ENCODE measurements at regions of chr7 and their contacts with region 1.

Region 1: DNA sequence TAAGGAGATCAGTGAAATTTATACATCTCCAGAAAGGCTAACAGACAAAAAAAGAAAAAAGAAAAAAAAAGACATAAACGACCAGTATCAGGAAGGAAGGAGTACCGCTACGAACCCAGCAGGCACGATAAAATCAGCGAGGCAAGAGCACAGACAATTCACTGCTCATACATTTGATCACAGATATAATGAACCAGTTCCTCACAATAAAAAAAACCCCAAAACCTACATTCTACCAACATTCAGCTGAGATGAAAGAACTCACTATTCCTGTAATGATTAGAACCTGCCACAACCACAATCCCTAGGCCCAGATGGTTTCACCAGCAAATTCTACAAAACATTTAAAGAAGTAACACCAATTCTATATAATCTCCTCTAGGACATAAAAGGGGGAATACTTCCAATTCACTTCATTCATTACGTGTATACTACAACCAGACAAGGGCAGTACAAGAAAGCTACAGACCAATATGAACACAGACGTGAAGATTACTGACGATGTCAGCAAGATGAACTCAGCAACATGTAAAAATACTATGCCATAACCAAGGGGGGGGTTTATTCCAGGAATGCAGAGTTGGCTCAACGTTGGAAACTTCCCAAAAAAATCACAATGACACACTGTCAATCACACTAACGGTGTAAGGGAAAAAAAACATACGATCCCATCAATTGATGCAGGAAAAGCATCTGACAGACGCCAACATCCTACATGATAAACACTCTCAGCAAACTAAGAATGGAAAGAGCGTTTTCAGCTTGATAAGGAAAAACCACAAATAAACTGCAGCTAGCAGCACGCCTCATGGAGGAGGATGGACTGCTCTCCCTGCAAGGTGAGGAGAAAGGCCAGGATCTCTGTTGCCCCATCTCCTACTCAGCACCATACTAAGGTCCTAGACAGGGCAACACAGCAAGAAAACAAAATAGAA is 256.2 kb downstream of the ELFN1 start:
- DNase-seq: no peak

Region 2: GRCh38 chr7:1946025-1946772 is 20.0 kb after region 1 on chr7:
- intact Hi-C with region 1: loop called in 1 of 2 experiments (anchors 1 kb)
- DNase-seq: peak; percentile 57

Measured in posterior vena cava (tissue), 2 donors.